Heart left ventricle (tissue), 16 donors: ENCODE measurements at regions of chrX and their contacts with region 1.

Region 1: GRCh38 chrX:150365051-150365989 is 2.2 kb downstream of the MAMLD1 start:
- DNase-seq: peak; percentile 68 to 88 (median 75)
- ATAC-seq: peak; percentile 49 to 74 (median 64)
- H3K4me3 ChIP-seq: peak overlapping the region; percentile 19 to 86 (median 64)
- H3K27ac ChIP-seq: peak overlapping the region in 11 of 12 donors; percentile 59 to 90 (median 79)
- H3K4me1 ChIP-seq: peaks cover 0 to 20% (median 5%) of the 10 kb centered on the region in 12 donors
- H3K27me3 ChIP-seq: peaks cover 0 to 41% (median 0%) of the 10 kb centered on the region in 9 donors
- CTCF ChIP-seq: peak; percentile 41 to 69 (median 59)
- POLR2A ChIP-seq: peak in 1 of 2 donors; percentile 17

Region 2: GRCh38 chrX:150200820-150201287 is 164.5 kb before region 1 on chrX:
- intact Hi-C with region 1: loop called in 1 of 10 experiments (anchors 10 kb)
- DNase-seq: peak in 2 of 5 donors; percentile 67 to 79
- ATAC-seq: peak in 3 of 4 donors; percentile 71 to 94 (median 81)
- H3K4me3 ChIP-seq: no peak overlapping the region
- H3K27ac ChIP-seq: no peak overlapping the region
- H3K4me1 ChIP-seq: peaks cover 0 to 4% (median 0%) of the 10 kb centered on the region in 12 donors
- H3K27me3 ChIP-seq: peaks cover 0 to 3% (median 0%) of the 10 kb centered on the region in 9 donors
- CTCF ChIP-seq: no peak
- POLR2A ChIP-seq: no peak

Region 3: GRCh38 chrX:150219374-150220185 is 145.7 kb before region 1 on chrX:
- intact Hi-C with region 1: loop called in 5 of 10 experiments (anchors 5 to 10 kb)
- DNase-seq: peak in 1 of 5 donors; percentile 38
- ATAC-seq: peak in 1 of 4 donors; percentile 33
- H3K4me3 ChIP-seq: no peak overlapping the region
- H3K27ac ChIP-seq: no peak overlapping the region
- H3K4me1 ChIP-seq: no peaks in the 10 kb centered on the region
- H3K27me3 ChIP-seq: peaks cover 0 to 8% (median 0%) of the 10 kb centered on the region in 9 donors
- CTCF ChIP-seq: no peak
- POLR2A ChIP-seq: no peak

Region 4: DNA sequence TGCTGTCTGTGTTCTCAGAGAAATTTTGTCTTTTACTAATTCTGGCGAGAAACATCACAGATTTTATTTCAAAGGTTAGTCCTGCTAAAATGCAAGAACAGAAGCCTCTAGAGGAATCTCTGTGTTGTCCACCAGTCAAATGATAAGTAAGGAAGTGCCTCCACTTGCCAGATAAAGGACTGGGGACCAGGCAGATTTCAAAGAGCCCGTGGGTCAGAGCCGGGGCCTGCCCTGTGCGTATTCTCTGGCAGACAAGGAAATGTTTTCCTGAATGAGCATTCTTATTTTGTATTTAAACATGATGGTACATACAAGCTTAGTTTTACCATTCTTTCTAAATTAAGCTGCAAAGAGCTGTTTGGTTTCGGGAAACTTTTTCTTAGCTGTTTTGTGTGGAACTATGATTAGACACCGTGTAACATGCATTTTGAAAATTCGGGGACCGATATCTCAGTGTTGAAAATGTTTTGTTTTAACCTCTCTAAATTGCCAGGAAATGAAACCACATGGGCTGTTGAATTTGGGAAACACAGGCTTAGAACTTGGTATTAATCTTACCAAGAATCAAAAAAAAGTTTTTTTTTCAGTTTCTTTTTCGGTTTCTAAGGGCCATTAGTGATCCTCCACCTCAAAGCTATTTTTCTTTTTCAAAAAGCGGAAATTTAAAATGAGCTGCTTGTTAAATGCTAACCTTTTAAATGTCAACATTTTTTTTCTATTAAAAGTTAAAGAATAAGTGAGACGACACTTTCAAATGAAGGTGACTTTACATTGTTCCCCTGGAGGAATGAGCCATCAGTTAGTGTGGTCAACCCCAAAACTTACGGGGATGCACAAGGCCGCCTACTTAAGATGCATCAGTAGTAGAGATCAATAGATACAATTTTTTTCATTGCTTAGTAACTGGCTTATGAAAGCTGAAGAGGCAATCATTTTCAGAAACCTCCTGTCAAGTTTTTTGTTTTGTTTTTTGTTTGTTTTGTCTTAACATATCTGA is 113.5 kb after region 1 on chrX:
- intact Hi-C with region 1: loop called in 3 of 10 experiments (anchors 10 kb)
- DNase-seq: no peak
- ATAC-seq: no peak
- H3K4me3 ChIP-seq: peak overlapping the region in 2 of 12 donors; percentile 10 to 33
- H3K27ac ChIP-seq: peak overlapping the region in 1 of 12 donors; percentile 60
- H3K4me1 ChIP-seq: peaks cover 0 to 14% (median 0%) of the 10 kb centered on the region in 12 donors
- H3K27me3 ChIP-seq: peaks cover 0 to 4% (median 0%) of the 10 kb centered on the region in 9 donors
- CTCF ChIP-seq: no peak
- POLR2A ChIP-seq: no peak

Region 5: DNA sequence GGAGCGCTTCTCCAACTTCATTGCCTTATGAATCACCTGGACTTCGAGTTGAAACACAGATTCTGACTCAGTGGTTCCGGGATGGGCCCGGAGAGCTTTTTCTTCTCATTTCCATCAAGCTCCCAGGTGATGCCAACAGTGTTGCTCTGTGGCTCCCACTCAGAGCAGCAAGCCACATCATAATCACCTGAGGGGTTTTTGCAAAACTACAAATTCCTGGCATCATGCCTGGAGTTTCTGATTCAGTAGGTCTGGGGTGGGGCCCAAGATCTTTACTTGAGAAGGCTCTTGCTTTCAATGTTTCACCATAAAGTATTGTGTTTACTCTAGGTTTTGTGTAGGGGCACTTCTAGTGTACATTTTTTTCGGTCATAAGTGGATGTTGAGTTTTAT is 210.1 kb after region 1 on chrX:
- intact Hi-C with region 1: loop called in 4 of 10 experiments (anchors 5 to 10 kb)
- DNase-seq: no peak
- ATAC-seq: no peak
- H3K4me3 ChIP-seq: peak overlapping the region in 1 of 12 donors; percentile 25
- H3K27ac ChIP-seq: peak overlapping the region in 1 of 12 donors; percentile 54
- H3K4me1 ChIP-seq: peaks cover 0 to 54% (median 8%) of the 10 kb centered on the region in 12 donors
- H3K27me3 ChIP-seq: no peaks in the 10 kb centered on the region
- CTCF ChIP-seq: no peak
- POLR2A ChIP-seq: no peak

Region 6: DNA sequence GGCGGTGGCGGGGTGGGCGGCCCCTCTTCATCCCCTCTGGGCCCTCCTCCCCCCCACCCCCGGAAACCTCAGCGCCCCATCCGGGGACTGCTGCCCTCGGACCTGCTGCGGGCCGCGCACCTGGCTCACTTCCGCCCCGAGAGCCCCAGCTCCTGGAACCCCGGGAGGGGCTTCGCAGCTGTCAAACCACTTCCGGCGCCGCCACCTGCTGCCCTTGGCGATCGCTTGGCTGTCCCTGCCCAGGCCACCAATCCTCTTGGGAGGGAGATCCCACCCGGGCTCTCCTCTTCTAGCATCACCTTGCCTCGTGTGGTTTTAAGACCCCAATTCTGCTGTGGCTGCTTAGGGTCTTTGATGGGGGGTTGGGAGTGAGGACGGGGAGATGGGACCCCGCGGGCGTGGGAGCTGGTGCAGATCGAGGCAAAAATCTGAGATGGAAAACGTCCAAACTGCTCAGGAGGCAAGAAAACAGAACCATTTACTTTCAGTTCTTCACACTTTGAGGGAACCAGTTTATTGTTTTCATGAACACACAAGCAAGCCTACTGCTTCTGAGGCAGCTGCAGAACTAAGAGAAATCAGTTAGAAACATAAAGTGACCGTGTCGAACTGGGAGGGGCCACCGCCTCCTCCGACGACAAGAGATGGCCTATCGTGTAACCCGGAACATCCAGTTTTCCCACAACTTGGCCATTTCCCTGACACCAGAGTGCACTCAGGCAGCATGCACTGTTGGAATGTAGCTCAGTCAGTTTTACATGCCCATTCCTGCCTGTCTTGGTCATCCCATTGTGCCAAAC is 328.7 kb after region 1 on chrX:
- intact Hi-C with region 1: loop called in 1 of 10 experiments (anchors 10 kb)
- DNase-seq: peak; percentile 27 to 75 (median 42)
- ATAC-seq: peak in 3 of 4 donors; percentile 40 to 46 (median 46)
- H3K4me3 ChIP-seq: peak overlapping the region; percentile 8 to 83 (median 60)
- H3K27ac ChIP-seq: peak overlapping the region; percentile 35 to 81 (median 72)
- H3K4me1 ChIP-seq: peaks cover 0 to 24% (median 0%) of the 10 kb centered on the region in 12 donors
- H3K27me3 ChIP-seq: no peaks in the 10 kb centered on the region
- CTCF ChIP-seq: no peak
- POLR2A ChIP-seq: no peak

Region 7: GRCh38 chrX:150805736-150806135 is 440.4 kb after region 1 on chrX:
- intact Hi-C with region 1: no loop called
- DNase-seq: no peak
- ATAC-seq: no peak
- H3K4me3 ChIP-seq: no peak overlapping the region
- H3K27ac ChIP-seq: no peak overlapping the region
- H3K4me1 ChIP-seq: no peaks in the 10 kb centered on the region
- H3K27me3 ChIP-seq: no peaks in the 10 kb centered on the region
- CTCF ChIP-seq: no peak
- POLR2A ChIP-seq: no peak